Ovary (tissue), 10 donors: ENCODE measurements at regions of chr3 and their contacts with region 1.

Region 1: DNA sequence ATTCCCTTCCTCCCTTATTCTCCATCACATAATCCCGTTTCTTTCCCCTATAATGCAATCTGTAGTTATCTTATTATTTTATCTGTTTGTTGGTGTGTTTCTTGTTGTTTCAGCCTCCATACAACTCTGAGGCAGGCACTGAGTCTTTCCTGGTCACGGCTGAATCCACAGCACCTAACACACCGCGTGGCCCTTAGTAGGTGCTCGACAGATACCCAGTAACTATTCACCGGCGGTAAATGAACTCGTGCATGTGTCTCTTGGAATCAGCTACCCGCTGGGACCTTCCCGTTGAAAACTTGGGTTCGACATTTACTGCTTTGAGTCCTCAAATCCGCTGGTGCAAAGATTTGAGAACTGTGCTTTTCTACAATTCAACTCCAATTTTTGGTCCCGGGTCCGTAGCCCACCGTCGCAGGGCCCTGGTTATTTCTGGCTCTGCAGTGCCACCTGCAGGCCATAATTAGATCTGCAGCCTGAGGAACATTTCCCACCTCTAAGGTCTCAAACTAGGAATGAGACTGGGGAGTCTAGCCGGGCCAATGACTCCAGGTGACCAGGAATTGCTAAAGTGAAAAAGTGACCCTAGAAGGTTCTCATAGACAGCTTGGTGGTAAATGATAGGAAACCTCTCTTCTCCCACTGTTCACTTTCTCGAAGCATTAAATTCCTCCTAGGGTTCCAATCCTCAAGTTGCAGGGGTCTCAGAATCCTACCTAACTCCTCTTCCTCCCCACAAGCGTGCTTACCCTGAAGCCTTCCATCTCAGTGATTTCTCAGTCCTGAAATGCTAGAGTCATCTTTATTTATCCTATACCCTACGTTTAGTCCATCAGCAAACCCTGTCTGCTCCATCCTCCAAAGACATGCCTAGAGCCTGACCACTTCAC is 40.0 kb upstream of the TRH start:
- DNase-seq: peak; percentile 19 to 60 (median 37)
- H3K4me3 ChIP-seq: no peak overlapping the region
- H3K27ac ChIP-seq: no peak overlapping the region
- H3K4me1 ChIP-seq: peaks cover 3% of the 10 kb centered on the region
- H3K27me3 ChIP-seq: no peaks in the 10 kb centered on the region
- CTCF ChIP-seq: peak; percentile 81 to 89 (median 89)
- EP300 ChIP-seq: no peak
- POLR2A ChIP-seq: no peak

Region 2: DNA sequence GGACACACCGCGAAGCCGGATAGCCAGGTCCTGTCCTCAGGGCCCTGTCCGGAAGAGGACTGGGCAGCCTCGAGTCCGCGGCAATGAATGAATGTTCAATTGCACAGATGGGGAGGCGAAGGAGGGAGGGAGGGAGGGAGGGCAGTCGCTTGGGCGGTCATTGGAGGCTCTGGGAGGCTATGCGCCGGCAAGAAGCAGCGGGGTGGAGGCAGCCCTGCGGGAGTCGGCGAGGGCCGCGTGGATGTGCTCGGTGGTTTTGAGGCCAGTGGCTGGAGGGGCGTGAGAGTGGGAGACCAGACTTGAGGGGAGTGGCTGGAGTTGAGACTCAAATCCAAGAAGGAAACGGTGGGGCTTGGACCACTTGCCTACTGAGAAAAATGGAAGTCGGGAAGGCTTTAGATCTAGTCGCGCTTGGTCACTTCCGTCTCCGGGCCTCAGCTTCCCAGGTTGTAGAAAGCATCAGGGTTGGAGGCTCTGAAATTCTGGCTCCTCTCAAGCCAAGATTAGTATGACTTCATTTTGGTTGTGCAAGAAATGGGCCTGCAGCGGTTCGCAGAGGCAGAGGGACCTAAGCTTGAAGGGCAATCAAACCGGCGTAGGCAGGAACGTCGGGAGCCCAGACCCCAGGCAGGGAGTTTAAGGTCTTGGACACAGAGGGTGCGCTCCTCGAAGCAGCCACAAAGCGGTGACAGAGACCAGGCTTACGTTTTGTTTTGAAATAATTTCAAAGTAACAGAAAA is 306.9 kb before region 1 on chr3:
- intact Hi-C with region 1: loop called in 2 of 4 experiments (anchors 5 to 10 kb)
- DNase-seq: peak; percentile 70 to 81 (median 76)
- H3K4me3 ChIP-seq: peak overlapping the region; percentile 59
- H3K27ac ChIP-seq: peak overlapping the region; percentile 46 to 93
- H3K4me1 ChIP-seq: peaks cover 5% of the 10 kb centered on the region
- H3K27me3 ChIP-seq: no peaks in the 10 kb centered on the region
- CTCF ChIP-seq: peak; percentile 23 to 76 (median 72)
- EP300 ChIP-seq: no peak
- POLR2A ChIP-seq: peak; percentile 29

Region 3: DNA sequence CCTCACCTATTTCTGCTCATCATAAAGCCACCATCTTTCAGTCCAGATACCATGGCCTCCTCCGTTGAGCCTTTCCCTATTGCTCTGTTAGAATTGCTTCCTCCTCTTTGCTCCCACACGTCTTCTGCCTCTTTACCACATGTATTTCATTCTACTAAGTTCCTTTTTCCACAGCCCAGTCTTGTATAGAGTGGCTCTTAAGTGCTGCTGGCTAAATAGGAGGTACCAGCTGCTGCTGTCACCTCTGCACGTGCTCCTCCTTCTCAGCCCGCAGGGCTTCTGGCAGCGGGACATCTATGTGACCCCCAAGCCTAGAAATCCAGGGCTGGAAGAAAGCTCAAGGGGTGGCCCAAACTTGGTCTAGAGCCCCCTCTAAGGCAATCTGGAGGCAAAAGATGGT is 289.2 kb before region 1 on chr3:
- intact Hi-C with region 1: loop called in 3 of 4 experiments (anchors 5 to 10 kb)
- DNase-seq: no peak
- H3K4me3 ChIP-seq: no peak overlapping the region
- H3K27ac ChIP-seq: no peak overlapping the region
- H3K4me1 ChIP-seq: no peaks in the 10 kb centered on the region
- H3K27me3 ChIP-seq: no peaks in the 10 kb centered on the region
- CTCF ChIP-seq: no peak
- EP300 ChIP-seq: no peak
- POLR2A ChIP-seq: no peak